ENCODE measurements at regions of chr15 and their contacts with region 1.

Region 1: GRCh38 chr15:40906091-40906990 is 12.1 kb downstream of the VPS18 start:
- DNase-seq: peak; percentile 92 to 95
- ATAC-seq: peak; percentile 91
- H3K4me3 ChIP-seq: peak overlapping the region in 1 of 2 donors; percentile 13
- H3K27ac ChIP-seq: peak overlapping the region; percentile 58 to 86
- H3K4me1 ChIP-seq: no peaks in the 10 kb centered on the region
- H3K27me3 ChIP-seq: no peaks in the 10 kb centered on the region

Region 2: DNA sequence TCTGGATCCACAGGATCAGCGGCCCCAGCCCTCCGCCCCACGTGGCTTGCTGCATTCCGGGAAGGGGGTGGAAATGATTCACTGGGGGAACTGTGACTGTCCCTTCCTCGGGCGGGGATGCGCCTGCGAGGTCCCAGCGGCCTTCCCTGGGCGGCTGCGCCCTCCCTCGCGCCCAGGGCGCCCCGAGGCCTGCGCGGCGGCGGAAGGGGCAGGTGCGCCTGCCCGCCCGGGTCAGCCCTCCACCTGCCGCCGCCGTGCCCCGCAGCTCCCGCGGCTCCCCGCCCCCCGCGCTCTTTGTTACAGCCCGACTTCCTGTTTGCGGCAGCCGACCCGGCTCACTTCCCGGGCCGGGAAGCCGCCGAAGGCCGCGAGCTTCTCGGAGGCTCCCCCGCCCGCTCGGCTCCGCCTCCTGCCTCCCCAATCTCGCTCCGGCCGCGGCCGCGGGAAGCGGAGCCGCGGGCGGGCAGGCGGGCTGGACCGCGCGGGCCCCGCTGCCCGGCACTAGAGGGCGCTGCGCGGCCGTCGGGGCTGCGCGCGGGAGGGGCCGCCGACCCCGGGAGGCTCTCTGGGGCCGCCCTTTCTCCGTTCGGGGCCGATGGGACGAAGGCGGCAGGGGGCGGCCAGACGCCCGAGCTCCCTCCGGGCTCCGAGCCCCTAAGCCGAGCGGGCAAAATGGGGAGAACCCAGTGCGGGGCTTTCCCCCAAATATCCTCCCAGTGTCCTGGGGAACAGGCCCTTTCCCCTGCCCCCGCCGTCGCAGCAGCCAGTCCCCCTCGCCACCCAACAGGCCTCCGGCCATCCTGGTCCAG is 35.4 kb after region 1 on chr15:
- intact Hi-C with region 1: loop called (anchors 2 to 5 kb)
- DNase-seq: peak; percentile 86 to 93
- ATAC-seq: peak; percentile 91
- H3K4me3 ChIP-seq: peak overlapping the region; percentile 40 to 48
- H3K27ac ChIP-seq: peak overlapping the region; percentile 44 to 79
- H3K4me1 ChIP-seq: no peaks in the 10 kb centered on the region
- H3K27me3 ChIP-seq: no peaks in the 10 kb centered on the region

Region 3: GRCh38 chr15:40982855-40983254 is 76.5 kb after region 1 on chr15:
- intact Hi-C with region 1: loop called in 1 of 2 experiments (anchors 2 kb)
- DNase-seq: peak; percentile 88 to 90
- ATAC-seq: peak; percentile 63
- H3K4me3 ChIP-seq: no peak overlapping the region
- H3K27ac ChIP-seq: peak overlapping the region; percentile 72 to 84
- H3K4me1 ChIP-seq: peaks cover 7 to 8% of the 10 kb centered on the region in 2 donors
- H3K27me3 ChIP-seq: no peaks in the 10 kb centered on the region

Region 4: DNA sequence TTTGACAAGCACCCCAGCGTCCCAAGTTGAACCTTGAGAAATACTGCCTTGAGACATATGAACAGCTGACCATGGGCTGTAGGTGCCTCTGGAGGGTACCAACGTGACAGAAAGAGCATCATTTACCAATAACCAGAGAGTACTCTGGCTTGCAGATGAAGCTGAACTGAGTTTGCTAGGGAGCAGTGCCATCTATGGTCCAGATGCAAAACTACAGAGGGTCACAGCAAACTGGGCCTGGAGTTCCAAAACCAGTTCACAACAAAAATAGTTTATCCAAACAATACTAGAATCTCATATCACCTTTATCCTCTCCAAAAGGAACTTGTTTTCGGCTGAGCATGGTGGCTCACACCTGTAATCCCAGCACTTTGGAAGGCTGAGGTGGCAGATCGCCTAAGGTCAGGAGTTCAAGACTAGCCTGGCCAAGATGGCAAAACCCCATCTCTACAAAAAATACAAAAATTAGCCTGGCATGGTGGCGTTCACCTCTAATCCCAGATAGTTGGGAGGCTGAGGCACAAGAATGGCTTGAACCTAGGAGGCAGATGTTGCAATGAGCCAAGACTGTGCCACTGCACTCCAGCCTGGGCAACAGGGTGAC is 116.2 kb after region 1 on chr15:
- intact Hi-C with region 1: loop called (anchors 2 kb)
- DNase-seq: peak in 1 of 2 donors; percentile 47
- ATAC-seq: peak; percentile 71
- H3K4me3 ChIP-seq: no peak overlapping the region
- H3K27ac ChIP-seq: peak overlapping the region in 1 of 2 donors; percentile 78
- H3K4me1 ChIP-seq: peaks cover 2 to 5% of the 10 kb centered on the region in 2 donors
- H3K27me3 ChIP-seq: no peaks in the 10 kb centered on the region

Region 5: DNA sequence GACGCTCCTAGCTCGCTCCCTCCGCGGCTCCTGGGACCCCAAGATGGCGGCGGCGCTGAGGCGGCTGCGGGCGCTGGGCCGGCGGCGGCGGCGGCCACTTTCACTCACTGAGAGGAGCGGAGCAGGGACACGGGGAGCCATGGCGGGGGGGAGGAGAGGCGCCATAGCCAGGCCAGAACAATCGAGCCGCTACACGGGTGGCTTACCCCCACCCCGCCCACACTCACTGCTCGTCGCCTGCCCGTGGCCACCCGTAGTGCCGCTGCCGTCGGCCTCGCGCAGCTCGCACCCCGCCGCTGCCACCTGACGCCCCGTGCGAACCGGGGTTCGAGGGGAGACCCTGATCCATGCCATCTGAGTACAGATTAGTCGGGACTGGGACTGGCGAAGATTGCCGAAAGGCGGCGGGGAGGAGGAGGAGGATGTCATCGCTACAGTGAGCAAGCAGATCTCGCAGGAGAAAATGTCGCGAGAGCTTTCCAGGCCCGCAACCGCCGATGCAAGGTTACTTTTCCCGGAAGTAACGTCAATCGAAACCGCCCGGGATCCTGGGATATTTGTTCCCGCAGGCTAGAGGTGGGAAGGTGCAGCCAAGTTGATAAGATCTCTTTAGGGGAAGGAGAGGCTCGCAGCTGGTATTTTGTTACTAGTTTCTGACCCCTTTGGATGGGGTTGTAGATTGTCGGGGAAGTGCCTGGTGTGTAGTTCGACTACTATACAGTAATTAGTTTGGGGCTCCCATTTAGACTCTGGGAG is 210.0 kb after region 1 on chr15 and contains the start of gene INO80:
- intact Hi-C with region 1: loop called in 1 of 2 experiments (anchors 5 kb)
- DNase-seq: peak; percentile 99 to 100
- ATAC-seq: peak; percentile 98
- H3K4me3 ChIP-seq: peak within 1 kb of the TSS; percentile 78 to 91
- H3K27ac ChIP-seq: peak within 1 kb of the TSS; percentile 87 to 94
- H3K4me1 ChIP-seq: no peaks in the 10 kb centered on the region
- H3K27me3 ChIP-seq: no peaks in the 10 kb centered on the region
- total RNA-seq, gene INO80: 23.5 to 25.1 TPM

Region 6: DNA sequence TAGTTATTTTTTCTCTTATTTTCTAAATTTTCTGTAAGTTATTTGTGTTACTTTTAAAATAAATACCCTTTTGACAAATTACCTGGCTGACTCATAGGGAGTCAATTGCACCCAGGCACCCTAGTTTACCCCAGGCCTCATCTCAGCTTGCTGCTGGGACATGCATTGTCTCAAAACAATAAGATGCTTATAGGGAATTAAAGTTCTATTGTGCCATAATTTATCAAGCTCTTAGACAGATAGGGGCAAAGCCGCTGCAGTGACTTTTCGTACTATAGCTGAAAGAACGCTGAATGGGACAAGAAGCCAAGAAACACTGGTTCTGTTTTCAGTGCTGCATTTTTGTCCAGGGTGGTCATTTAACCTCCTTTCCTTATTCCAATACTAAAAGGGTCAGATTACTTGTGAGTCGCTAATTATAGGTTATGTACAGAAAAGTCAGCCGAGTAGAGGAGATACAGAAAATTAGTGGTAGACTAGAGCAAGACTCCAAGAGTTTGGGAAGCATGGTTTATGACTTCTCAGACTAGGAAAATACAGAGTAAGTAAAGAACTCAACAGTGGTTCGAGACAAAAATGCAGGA is 274.0 kb after region 1 on chr15:
- intact Hi-C with region 1: loop called (anchors 2 to 5 kb)
- DNase-seq: no peak
- ATAC-seq: no peak
- H3K4me3 ChIP-seq: no peak overlapping the region
- H3K27ac ChIP-seq: no peak overlapping the region
- H3K4me1 ChIP-seq: no peaks in the 10 kb centered on the region
- H3K27me3 ChIP-seq: no peaks in the 10 kb centered on the region

Region 7: GRCh38 chr15:41621200-41622193 is 715.2 kb after region 1 on chr15:
- intact Hi-C with region 1: no loop called
- DNase-seq: peak; percentile 87 to 93
- ATAC-seq: peak; percentile 95
- H3K4me3 ChIP-seq: peak overlapping the region; percentile 9 to 21
- H3K27ac ChIP-seq: peak overlapping the region in 1 of 2 donors; percentile 22
- H3K4me1 ChIP-seq: no peaks in the 10 kb centered on the region
- H3K27me3 ChIP-seq: no peaks in the 10 kb centered on the region

Measured in aorta (tissue), 5 donors.